Activated CD4-positive, alpha-beta memory T cell treated with anti-CD3 and anti-CD28 coated beads, Interleukin-2, amount 10 ng/mL, durations not matched to agents 7 days and 5 days (primary cell): ENCODE measurements at regions of chrX and their contacts with region 1.

Region 1: DNA sequence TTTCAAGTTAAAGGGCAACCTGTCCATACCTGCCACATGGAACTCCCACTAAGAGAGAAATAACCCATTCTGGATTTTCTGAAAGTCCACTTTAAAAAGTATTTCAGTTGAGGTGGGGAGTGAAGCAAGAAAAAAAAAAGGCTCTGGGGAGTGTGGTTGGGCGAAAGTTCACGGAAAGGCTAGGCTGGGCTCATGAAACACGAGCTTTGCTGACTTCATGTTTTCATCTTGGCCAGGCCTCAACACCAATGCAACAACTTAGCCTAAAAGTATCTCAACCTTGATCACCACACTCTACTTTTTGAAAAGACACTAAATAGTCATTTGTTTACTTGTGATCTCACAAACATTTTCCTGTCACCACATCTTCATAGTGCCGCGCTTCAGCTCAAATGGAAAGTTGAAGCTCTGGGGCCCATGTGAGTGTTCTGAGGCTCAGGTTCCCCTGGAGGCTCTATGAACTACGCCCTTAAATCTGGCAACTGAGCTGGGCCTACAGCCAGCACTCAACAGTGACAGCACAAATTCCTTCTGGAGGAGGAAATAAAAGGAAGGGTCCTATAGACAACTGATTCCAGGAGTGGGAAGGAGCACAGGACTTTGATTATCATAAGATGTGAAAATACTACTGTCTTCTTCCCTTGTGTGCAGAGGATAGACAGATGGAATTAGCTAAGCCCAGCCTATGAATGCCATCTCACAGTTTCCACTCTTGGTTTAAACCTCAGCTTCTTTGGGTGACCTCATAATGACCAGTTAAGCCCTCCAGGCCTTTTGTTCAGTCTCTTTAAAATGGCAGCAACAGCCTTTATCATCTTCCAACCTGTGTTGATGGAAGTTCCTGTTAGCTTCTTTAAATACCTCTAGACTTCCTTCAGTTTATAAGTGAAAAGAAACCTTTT is 5.1 kb downstream of the CD40LG start:
- DNase-seq: peak; percentile 51
- H3K4me3 Mint-ChIP-seq: peak overlapping the region; percentile 96
- H3K27ac Mint-ChIP-seq: peak overlapping the region; percentile 91
- H3K4me1 Mint-ChIP-seq: peaks cover 55% of the 10 kb centered on the region
- H3K27me3 Mint-ChIP-seq: no peaks in the 10 kb centered on the region

Region 2: GRCh38 chrX:136496770-136497598 is 156.1 kb before region 1 on chrX and contains the start of gene HTATSF1:
- CTCF ChIA-PET with region 1: no interaction called
- POLR2A ChIA-PET with region 1: interaction called, 11 read pairs
- DNase-seq: peak; percentile 90
- H3K4me3 Mint-ChIP-seq: peak within 1 kb of the TSS; percentile 88
- H3K27ac Mint-ChIP-seq: peak within 1 kb of the TSS; percentile 97
- H3K4me1 Mint-ChIP-seq: peaks cover 36% of the 10 kb centered on the region
- H3K27me3 Mint-ChIP-seq: peaks cover 8% of the 10 kb centered on the region
- total RNA-seq, gene HTATSF1: 63.7 to 64.1 TPM

Region 3: DNA sequence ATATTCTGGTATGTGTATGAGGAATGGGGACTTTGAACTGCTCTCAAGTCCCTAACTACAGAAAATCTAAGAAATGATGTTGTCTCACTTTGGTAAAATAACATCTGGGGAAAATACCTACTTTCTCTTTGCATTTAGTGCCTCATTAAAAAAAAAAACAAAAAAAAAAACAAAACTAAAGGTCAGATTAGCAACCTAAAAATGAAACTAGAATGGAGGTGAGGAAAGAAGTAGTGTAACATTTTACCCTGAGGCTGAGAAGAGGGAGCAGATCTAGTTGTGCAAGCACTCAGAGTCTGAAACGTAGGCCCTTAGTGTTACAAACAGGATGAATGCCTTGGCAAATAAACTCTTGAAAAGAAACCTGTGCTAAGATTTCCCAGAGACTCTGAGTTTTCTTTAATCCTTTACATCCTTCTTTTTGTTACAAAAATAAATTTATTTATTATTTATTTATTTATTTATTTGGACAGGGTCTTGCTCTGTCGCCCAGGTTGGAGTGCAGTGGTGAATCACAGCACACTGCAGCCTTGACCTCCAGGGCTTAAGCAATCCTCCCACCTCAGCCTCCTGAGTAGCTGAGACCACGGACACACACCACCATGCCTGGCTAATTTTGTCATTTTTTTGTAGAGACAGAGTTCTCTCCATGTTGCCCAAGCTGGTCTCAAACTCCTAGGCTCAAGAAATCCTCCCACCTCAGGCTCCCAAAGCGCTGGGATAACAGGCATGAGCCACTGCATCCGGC is 64.9 kb before region 1 on chrX:
- CTCF ChIA-PET with region 1: no interaction called
- POLR2A ChIA-PET with region 1: interaction called, 12 read pairs
- DNase-seq: no peak
- H3K4me3 Mint-ChIP-seq: peak overlapping the region; percentile 57
- H3K27ac Mint-ChIP-seq: peak overlapping the region; percentile 97
- H3K4me1 Mint-ChIP-seq: peaks cover 66% of the 10 kb centered on the region
- H3K27me3 Mint-ChIP-seq: no peaks in the 10 kb centered on the region

Region 4: DNA sequence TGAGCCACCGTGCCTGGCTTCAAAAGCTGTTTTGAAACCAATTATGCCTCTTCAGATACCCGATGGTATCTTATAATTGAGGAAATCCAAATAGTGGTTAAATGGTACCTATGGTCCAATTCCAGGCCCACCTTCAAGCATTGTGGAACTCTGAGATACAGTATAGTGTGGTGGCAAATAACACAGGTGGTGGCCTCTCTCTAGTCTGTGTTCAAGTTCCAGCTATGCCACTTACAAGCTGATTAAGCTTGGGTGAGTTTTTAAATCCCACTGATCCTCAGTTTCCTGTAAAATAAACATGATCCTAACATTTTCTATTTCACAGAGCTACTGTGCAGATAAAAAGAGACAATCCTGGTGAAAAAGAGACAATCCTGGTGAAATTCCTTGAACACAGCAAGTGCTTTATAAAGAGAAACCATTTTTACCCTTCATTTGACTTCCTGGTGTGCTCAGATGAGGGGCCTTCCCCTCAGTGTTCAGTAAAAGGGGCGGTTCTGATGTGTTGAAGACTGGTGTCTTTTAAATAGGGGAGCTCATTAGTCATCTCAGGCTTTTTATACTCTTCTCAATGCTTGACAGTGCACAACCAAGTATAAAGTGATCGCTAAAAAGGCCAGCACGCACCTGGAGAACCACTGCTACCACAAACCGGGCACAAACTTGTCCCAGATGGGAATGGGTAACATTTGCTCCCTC is 35.9 kb before region 1 on chrX:
- CTCF ChIA-PET with region 1: interaction called, 4 read pairs
- POLR2A ChIA-PET with region 1: interaction called, 22 read pairs
- DNase-seq: peak; percentile 35
- H3K4me3 Mint-ChIP-seq: peak overlapping the region; percentile 32
- H3K27ac Mint-ChIP-seq: peak overlapping the region; percentile 87
- H3K4me1 Mint-ChIP-seq: peaks cover 66% of the 10 kb centered on the region
- H3K27me3 Mint-ChIP-seq: no peaks in the 10 kb centered on the region

Region 5: DNA sequence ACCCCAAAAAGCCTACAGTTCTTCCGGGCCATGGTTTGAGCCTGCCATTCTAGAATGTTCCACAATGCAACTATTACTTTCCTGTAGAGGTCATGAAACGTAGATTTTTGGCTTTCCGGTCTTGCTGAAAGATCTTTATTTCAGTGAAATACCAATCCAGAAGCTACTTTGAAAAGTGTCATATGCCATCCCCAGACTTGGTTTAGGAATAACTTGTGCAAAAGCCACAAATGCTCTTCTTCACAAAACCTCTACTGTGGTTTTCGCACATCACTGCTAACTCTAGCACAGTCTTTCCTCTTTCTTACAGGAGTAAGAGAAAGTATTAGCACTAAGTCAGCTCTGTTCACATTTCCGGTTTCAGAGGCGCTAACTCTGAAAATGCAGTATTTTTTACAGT is 17.8 kb before region 1 on chrX:
- CTCF ChIA-PET with region 1: interaction called, 10 read pairs
- POLR2A ChIA-PET with region 1: interaction called, 50 read pairs
- DNase-seq: no peak
- H3K4me3 Mint-ChIP-seq: peak overlapping the region; percentile 60
- H3K27ac Mint-ChIP-seq: peak overlapping the region; percentile 88
- H3K4me1 Mint-ChIP-seq: peaks cover 85% of the 10 kb centered on the region
- H3K27me3 Mint-ChIP-seq: no peaks in the 10 kb centered on the region

Region 6: DNA sequence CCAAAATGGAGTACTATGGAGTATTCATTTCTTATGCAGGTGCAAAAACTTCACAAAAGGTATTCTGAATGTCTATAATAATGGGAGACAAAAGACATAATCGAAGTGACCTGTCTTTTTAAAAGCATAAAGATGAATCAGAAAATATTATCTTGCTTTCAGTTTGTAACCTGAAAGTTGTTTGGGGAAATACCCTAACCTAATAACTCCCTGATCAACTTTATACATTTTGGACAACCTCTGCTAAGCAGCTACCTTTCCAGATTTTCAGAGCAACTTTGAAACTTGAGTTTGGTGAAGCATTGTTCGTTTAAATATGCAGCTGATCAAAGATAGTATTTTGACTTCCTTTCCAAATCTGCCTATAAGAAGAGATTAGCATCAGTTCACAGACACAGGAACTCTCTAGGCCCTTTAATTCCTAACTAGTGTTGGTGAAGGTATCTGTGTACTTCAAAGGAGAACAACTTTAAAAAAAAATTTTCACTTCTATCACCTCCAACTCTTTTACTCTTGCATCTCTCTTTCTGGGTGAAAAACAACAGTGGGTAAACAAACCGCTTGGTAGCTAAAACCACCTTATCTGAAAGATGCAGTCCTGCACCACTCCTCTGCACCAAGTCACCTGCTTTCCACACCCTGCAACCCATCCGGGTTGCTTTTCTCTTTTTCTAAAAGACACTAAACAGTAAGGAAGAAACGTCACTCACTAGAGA is 21.4 kb after region 1 on chrX:
- CTCF ChIA-PET with region 1: interaction called, 4 read pairs
- POLR2A ChIA-PET with region 1: interaction called, 46 read pairs
- DNase-seq: no peak
- H3K4me3 Mint-ChIP-seq: peak overlapping the region; percentile 57
- H3K27ac Mint-ChIP-seq: peak overlapping the region; percentile 97
- H3K4me1 Mint-ChIP-seq: peaks cover 83% of the 10 kb centered on the region
- H3K27me3 Mint-ChIP-seq: no peaks in the 10 kb centered on the region

Region 7: GRCh38 chrX:136759968-136760367 is 106.9 kb after region 1 on chrX:
- CTCF ChIA-PET with region 1: no interaction called
- POLR2A ChIA-PET with region 1: no interaction called
- DNase-seq: no peak
- H3K4me3 Mint-ChIP-seq: no peak overlapping the region
- H3K27ac Mint-ChIP-seq: peak overlapping the region; percentile 32
- H3K4me1 Mint-ChIP-seq: peaks cover 57% of the 10 kb centered on the region
- H3K27me3 Mint-ChIP-seq: no peaks in the 10 kb centered on the region

Region 8: GRCh38 chrX:136889269-136889668 is 236.2 kb after region 1 on chrX:
- CTCF ChIA-PET with region 1: no interaction called
- POLR2A ChIA-PET with region 1: no interaction called
- DNase-seq: no peak
- H3K4me3 Mint-ChIP-seq: no peak overlapping the region
- H3K27ac Mint-ChIP-seq: no peak overlapping the region
- H3K4me1 Mint-ChIP-seq: peaks cover 5% of the 10 kb centered on the region
- H3K27me3 Mint-ChIP-seq: no peaks in the 10 kb centered on the region